OCI-LY7 (cell line): ENCODE measurements at regions of chr6 and their contacts with region 1.

Region 1: GRCh38 chr6:158826801-158827573 is 7.8 kb upstream of the EZR start:
- DNase-seq: peak; percentile 48
- H3K4me3 ChIP-seq: no peak overlapping the region
- H3K27ac ChIP-seq: peak overlapping the region; percentile 43
- H3K4me1 ChIP-seq: peaks cover 33% of the 10 kb centered on the region
- CTCF ChIP-seq: no peak

Region 2: DNA sequence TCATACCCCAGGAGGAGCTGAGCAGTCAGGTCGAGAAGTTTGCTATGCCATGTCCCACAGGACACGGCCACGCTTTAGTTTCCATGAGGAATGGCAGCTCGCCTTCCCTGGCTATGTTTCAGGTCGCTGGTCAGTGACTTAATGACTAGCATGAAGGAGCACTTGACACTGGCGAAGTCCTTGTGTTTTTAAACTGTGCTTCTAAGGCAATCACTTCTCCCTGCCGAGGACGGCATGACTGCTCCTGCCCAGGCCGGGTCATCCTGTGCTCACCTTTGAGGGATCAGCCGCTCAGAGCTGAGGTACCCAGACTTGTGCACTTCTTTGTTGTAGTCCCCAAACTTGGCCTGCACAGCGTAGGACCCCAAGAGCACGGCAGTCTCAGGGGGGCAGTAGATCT is 42.0 kb before region 1 on chr6:
- CTCF ChIA-PET with region 1: no interaction called
- POLR2A ChIA-PET with region 1: no interaction called
- intact Hi-C with region 1: no loop called
- DNase-seq: no peak
- H3K4me3 ChIP-seq: no peak overlapping the region
- H3K27ac ChIP-seq: no peak overlapping the region
- H3K4me1 ChIP-seq: peaks cover 14% of the 10 kb centered on the region
- CTCF ChIP-seq: no peak

Region 3: DNA sequence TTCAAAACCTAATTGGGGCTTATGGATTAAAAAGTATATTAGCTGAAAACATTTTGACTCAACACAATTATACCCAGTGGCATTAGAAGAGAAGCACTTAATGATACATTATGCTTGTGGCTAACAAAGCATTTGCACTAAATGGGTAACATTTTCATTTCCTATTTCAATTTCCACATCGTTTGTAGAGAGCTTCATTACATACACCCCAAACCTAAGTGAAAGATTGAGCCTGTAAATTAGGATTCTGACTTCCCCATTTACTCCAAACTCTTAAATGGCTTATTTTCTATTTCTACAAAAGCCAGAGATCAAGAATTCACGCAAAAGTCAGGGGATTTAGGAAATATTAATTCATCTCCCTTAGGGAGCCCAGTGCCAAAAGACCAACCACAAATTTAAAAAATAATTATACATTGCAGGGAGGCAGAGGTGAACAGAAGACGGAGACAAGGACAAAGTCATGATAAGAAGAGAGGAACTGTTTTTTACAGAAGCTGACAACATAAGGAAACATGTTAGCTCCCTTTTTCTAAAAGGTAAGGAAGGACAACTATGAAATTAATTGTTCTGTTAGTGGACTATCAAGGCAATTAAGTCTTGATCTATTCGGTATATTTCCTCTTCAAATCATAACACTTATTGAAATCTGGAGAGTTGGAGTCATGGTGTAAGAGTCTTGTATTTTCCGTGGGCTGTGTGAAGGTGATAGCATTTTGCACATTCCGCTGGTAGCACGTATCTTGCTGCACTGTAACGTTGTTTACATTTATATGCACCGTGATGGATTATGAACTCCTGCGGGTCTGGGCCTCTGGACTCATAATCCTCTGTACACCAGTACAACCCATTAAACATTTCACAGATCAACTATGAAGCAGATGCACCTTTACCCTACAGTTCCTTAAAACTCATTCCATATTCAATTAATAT is 17.0 kb after region 1 on chr6:
- CTCF ChIA-PET with region 1: interaction called, 3 read pairs
- POLR2A ChIA-PET with region 1: interaction called, 17 read pairs
- intact Hi-C with region 1: no loop called
- DNase-seq: no peak
- H3K4me3 ChIP-seq: no peak overlapping the region
- H3K27ac ChIP-seq: no peak overlapping the region
- H3K4me1 ChIP-seq: peaks cover 14% of the 10 kb centered on the region
- CTCF ChIP-seq: no peak

Region 4: GRCh38 chr6:158853072-158853871 is 26.3 kb after region 1 on chr6:
- CTCF ChIA-PET with region 1: no interaction called
- POLR2A ChIA-PET with region 1: interaction called, 9 read pairs
- intact Hi-C with region 1: loop called (anchors 2 kb)
- DNase-seq: peak; percentile 85
- H3K4me3 ChIP-seq: peak overlapping the region; percentile 55
- H3K27ac ChIP-seq: peak overlapping the region; percentile 74
- H3K4me1 ChIP-seq: peaks cover 78% of the 10 kb centered on the region
- CTCF ChIP-seq: no peak